ENCODE measurements at regions of chr9 and their contacts with region 1.

Region 1: GRCh38 chr9:120438836-120439546 is 141.0 kb downstream of the CDK5RAP2 start:
- DNase-seq: peak; percentile 62
- ATAC-seq: peak; percentile 99
- H3K4me3 Mint-ChIP-seq: no peak overlapping the region
- H3K27ac Mint-ChIP-seq: no peak overlapping the region
- H3K4me1 Mint-ChIP-seq: no peaks in the 10 kb centered on the region
- H3K27me3 Mint-ChIP-seq: no peaks in the 10 kb centered on the region
- CTCF ChIP-seq: peak; percentile 67; the same call in 1 of the 2 replicates

Region 2: DNA sequence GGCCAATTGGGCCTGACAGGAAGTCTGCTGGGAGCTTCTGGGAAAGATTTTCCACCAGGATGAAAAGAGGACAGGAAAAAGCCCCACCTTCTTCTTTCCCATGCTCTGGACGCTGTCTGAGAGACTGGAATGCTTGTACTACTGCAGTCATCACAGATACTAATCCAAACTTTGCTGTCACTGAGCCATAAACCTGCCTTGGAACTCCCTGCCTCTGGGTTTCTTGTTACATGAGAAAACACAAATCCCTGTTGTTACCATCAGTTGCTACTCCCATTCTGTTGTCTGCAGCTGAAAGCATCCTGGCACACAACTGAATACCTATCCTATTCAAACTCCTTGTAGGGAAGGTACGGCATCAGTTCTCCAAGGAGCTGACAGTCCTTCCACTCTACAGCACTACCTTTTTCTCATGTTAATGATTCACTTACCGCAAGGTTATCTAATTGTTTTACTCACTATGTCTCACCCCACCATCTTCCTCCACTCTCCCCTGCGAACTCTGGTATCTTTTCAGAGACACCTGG is 26.5 kb before region 1 on chr9:
- CTCF ChIA-PET with region 1: interaction called, 14 read pairs
- POLR2A ChIA-PET with region 1: no interaction called
- DNase-seq: no peak
- ATAC-seq: peak; percentile 76
- H3K4me3 Mint-ChIP-seq: peak overlapping the region; percentile 8; the same call in 1 of the 2 replicates
- H3K27ac Mint-ChIP-seq: peak overlapping the region; percentile 83
- H3K4me1 Mint-ChIP-seq: peaks cover 55% of the 10 kb centered on the region
- H3K27me3 Mint-ChIP-seq: no peaks in the 10 kb centered on the region
- CTCF ChIP-seq: no peak

Region 3: DNA sequence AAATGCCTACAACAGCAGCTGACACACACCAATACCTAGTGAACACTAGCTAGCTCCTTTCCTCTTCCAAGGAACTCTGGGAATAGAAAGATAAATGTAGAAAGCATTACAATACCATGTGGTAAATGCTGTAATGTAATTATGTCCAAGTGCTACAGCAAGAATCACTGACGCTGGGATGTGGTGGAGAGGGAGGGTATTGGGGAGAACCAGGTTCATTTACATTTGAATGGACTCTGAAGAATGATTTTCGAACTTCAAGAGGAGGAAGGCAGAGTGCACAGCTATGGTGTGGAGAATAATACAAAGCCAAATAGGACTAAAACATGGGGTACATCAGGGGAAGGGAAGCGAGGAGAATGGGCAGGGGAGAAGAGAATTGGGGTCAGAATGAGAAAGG is 17.0 kb before region 1 on chr9:
- CTCF ChIA-PET with region 1: interaction called, 11 read pairs
- POLR2A ChIA-PET with region 1: interaction called, 3 read pairs
- DNase-seq: no peak
- ATAC-seq: no peak
- H3K4me3 Mint-ChIP-seq: no peak overlapping the region
- H3K27ac Mint-ChIP-seq: no peak overlapping the region
- H3K4me1 Mint-ChIP-seq: peaks cover 25% of the 10 kb centered on the region
- H3K27me3 Mint-ChIP-seq: no peaks in the 10 kb centered on the region
- CTCF ChIP-seq: no peak

Measured in WTC11 (cell line).